CD8-positive, alpha-beta T cell (primary cell): ENCODE measurements at regions of chr11 and their contacts with region 1.

Region 1: GRCh38 chr11:79438631-79439409 is 2.0 kb downstream of the TENM4 start:
- DNase-seq: no peak
- ATAC-seq: no peak
- H3K4me3 ChIP-seq: no peak overlapping the region
- H3K4me3 Mint-ChIP-seq: no peak overlapping the region
- H3K27ac ChIP-seq: no peak overlapping the region
- H3K27ac Mint-ChIP-seq: no peak overlapping the region
- H3K4me1 ChIP-seq: no peaks in the 10 kb centered on the region
- H3K4me1 Mint-ChIP-seq: peaks cover 11% of the 10 kb centered on the region
- H3K27me3 ChIP-seq: peaks cover 13 to 17% of the 10 kb centered on the region in 2 experiments
- H3K27me3 Mint-ChIP-seq: peaks cover 59% of the 10 kb centered on the region
- CTCF ChIP-seq: no peak

Region 2: DNA sequence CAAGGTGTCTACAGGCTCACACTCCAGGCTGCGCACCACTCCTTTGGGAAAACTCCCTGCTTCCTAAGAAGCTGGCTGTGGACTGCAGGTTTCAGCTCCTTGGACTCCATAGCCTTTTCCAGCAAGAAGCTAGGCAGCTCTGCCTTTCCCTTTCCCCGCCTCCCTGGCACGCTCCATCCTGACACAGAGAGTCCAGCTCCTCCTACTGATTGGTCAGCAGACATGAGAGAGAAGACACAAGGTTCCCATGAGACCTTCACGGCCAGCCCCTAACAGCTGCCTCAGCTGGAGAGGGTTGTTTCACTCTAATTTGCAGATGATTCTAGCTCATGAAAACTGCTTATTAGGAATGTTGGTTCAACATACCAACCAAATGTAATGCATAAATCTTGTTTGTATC is 25.6 kb before region 1 on chr11:
- CTCF ChIA-PET with region 1: no interaction called
- POLR2A ChIA-PET with region 1: no interaction called
- intact Hi-C with region 1: no loop called
- DNase-seq: no peak
- ATAC-seq: no peak
- H3K4me3 ChIP-seq: no peak overlapping the region
- H3K4me3 Mint-ChIP-seq: no peak overlapping the region
- H3K27ac ChIP-seq: no peak overlapping the region
- H3K27ac Mint-ChIP-seq: no peak overlapping the region
- H3K4me1 ChIP-seq: no peaks in the 10 kb centered on the region
- H3K4me1 Mint-ChIP-seq: no peaks in the 10 kb centered on the region
- H3K27me3 ChIP-seq: no peaks in the 10 kb centered on the region
- H3K27me3 Mint-ChIP-seq: no peaks in the 10 kb centered on the region
- CTCF ChIP-seq: no peak

Region 3: DNA sequence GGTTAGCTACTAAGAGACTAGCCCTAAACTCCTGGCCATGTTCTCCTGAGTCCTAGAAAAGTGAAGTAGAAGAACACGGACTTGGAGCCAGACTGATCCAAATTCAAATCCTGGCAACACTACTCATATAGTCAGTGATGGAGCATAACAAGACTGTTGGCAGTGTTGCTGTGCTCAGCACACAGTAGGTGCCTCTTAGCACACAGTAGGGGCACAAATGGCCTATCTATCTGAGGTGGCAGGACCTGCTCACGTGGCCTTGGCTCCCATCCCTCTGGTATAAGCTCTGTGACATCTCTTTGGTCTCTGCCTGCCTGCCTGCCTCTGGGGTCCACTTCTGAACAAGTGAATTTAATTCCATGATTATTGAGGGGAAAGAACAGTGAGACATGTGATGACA is 13.4 kb before region 1 on chr11:
- CTCF ChIA-PET with region 1: no interaction called
- POLR2A ChIA-PET with region 1: no interaction called
- intact Hi-C with region 1: loop called in 1 of 2 experiments (anchors 1 kb)
- DNase-seq: no peak
- ATAC-seq: no peak
- H3K4me3 ChIP-seq: no peak overlapping the region
- H3K4me3 Mint-ChIP-seq: no peak overlapping the region
- H3K27ac ChIP-seq: no peak overlapping the region
- H3K27ac Mint-ChIP-seq: no peak overlapping the region
- H3K4me1 ChIP-seq: no peaks in the 10 kb centered on the region
- H3K4me1 Mint-ChIP-seq: no peaks in the 10 kb centered on the region
- H3K27me3 ChIP-seq: no peaks in the 10 kb centered on the region
- H3K27me3 Mint-ChIP-seq: no peaks in the 10 kb centered on the region
- CTCF ChIP-seq: no peak